Naive thymus-derived CD4-positive, alpha-beta T cell (primary cell): ENCODE measurements at regions of chr7 and their contacts with region 1.

Region 1: DNA sequence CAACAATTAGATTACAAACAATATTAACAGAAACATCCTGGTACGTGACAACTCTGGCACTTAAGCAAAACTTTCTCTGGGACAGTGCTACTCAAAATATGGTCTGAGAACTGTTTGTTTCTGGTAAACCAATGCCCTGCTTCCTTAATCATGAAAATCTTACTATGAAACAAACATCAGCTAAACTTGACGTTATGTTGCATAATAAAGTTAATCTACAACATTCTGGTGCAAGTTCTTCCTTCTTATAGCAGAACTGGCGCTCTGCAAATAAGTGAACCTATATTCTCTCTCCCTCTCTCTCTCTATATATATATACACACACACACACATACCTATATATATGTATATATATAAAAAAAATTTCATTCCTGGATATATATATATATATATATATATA is 7.8 kb downstream of the C7orf33 start:
- DNase-seq: no peak
- ATAC-seq: no peak
- H3K4me3 ChIP-seq: no peak overlapping the region
- H3K4me3 Mint-ChIP-seq: no peak overlapping the region
- H3K27ac ChIP-seq: no peak overlapping the region
- H3K27ac Mint-ChIP-seq: no peak overlapping the region
- H3K4me1 ChIP-seq: no peaks in the 10 kb centered on the region
- H3K4me1 Mint-ChIP-seq: peaks cover 0 to 2% (median 0%) of the 10 kb centered on the region in 7 donors
- H3K27me3 ChIP-seq: no peaks in the 10 kb centered on the region
- H3K27me3 Mint-ChIP-seq: peaks cover 0 to 21% (median 6%) of the 10 kb centered on the region in 5 donors

Region 2: DNA sequence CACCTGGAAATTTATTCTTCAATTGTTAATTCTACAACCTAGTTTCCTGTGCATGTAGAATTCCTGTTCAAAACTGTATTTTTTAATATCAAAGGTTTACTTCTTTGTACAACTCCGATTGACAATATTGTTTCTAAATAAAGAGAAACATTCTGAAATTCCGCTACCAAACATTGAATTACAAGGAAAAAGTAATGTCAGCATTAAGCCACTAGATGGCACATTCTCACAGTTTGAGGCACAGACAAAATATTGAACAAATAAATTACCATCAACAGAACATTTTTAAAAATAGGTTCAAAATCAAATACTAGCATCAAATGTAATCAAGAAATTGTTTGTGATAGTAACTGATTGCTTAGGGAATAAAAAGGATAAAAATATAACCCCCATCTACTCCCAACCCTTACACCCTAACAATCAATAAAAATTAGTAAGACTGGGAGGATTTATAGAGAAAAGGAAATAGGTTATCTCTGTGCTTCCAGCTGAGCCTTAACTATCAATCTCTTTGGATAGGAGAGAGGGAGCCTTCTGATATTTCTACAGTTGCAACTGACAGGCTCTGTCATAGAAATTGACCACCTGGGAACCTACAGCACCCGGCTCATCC is 94.4 kb before region 1 on chr7:
- CTCF ChIA-PET with region 1: no interaction called
- POLR2A ChIA-PET with region 1: no interaction called
- intact Hi-C with region 1: no loop called
- DNase-seq: peak in 7 of 9 donors; percentile 18 to 52 (median 40)
- ATAC-seq: no peak
- H3K4me3 ChIP-seq: no peak overlapping the region
- H3K4me3 Mint-ChIP-seq: no peak overlapping the region
- H3K27ac ChIP-seq: no peak overlapping the region
- H3K27ac Mint-ChIP-seq: no peak overlapping the region
- H3K4me1 ChIP-seq: no peaks in the 10 kb centered on the region
- H3K4me1 Mint-ChIP-seq: peaks cover 0 to 7% (median 0%) of the 10 kb centered on the region in 7 donors
- H3K27me3 ChIP-seq: no peaks in the 10 kb centered on the region
- H3K27me3 Mint-ChIP-seq: peaks cover 0 to 27% (median 16%) of the 10 kb centered on the region in 5 donors

Region 3: GRCh38 chr7:148611692-148612091 is 13.3 kb after region 1 on chr7:
- CTCF ChIA-PET with region 1: no interaction called
- POLR2A ChIA-PET with region 1: no interaction called
- intact Hi-C with region 1: loop called in 1 of 2 experiments (anchors 1 kb)
- DNase-seq: no peak
- ATAC-seq: no peak
- H3K4me3 ChIP-seq: no peak overlapping the region
- H3K4me3 Mint-ChIP-seq: no peak overlapping the region
- H3K27ac ChIP-seq: no peak overlapping the region
- H3K27ac Mint-ChIP-seq: no peak overlapping the region
- H3K4me1 ChIP-seq: peaks cover 0 to 7% of the 10 kb centered on the region in 2 donors
- H3K4me1 Mint-ChIP-seq: peaks cover 0 to 19% (median 12%) of the 10 kb centered on the region in 7 donors
- H3K27me3 ChIP-seq: peaks cover 0 to 4% of the 10 kb centered on the region in 2 donors
- H3K27me3 Mint-ChIP-seq: peaks cover 0 to 40% (median 9%) of the 10 kb centered on the region in 5 donors